ENCODE measurements at regions of chr14 and their contacts with region 1.

Region 1: GRCh38 chr14:58427281-58428117 is at the starts of genes KIAA0586 and TIMM9:
- DNase-seq: peak; percentile 100
- ATAC-seq: peak; percentile 89
- H3K4me3 ChIP-seq: peak within 1 kb of the TSS; percentile 70
- H3K27ac ChIP-seq: peak within 1 kb of the TSS; percentile 77
- H3K4me1 ChIP-seq: peaks cover 22% of the 10 kb centered on the region
- H3K27me3 ChIP-seq: no peaks in the 10 kb centered on the region
- CTCF ChIP-seq: no peak
- total RNA-seq, gene KIAA0586: 50.3 and 50.8 TPM in 2 replicates
- total RNA-seq, gene TIMM9: 105 and 155 TPM in 2 replicates

Region 2: GRCh38 chr14:58171090-58171489 is 256.4 kb before region 1 on chr14:
- CTCF ChIA-PET with region 1: no interaction called
- POLR2A ChIA-PET with region 1: interaction called, 15 read pairs
- intact Hi-C with region 1: no loop called
- DNase-seq: peak; percentile 99
- ATAC-seq: peak; percentile 99
- H3K4me3 ChIP-seq: no peak overlapping the region; the same call in 1 of the 2 replicates
- H3K27ac ChIP-seq: no peak overlapping the region
- H3K4me1 ChIP-seq: peaks cover 16% of the 10 kb centered on the region
- H3K27me3 ChIP-seq: 0 out of 2 replicates have a peak, but pooled peaks cover 7% of the 10 kb centered on the region
- CTCF ChIP-seq: no peak

Region 3: DNA sequence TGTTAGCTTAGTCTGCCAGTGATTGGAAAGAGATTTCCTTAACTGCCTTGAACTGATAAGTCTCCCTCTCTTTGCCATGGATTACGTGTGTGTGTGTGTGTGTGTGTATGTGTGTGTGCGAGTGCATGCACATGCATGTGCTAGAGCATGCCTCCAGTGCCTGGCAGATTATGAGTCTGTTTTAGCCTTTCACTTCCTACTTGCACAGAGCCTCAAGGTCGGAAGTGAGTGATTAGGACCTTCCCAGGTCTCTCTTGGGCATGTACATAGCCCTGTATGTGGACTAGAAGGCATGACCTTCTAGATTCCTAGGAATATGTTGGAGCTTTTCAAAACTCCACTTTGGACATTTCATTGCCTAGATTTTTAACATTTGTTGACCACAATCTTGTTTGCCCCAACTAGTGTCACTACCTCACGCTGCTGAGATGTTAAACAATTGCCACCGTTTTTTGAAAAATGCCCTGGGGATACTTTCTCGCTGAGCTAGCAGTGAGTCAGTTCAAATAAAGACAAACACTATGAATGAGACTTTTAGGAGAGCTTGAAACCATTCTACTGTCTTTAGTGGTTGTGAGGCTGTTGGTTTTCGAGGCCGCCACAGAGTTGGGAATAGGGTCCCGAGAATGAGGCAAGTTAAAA is 28.2 kb after region 1 on chr14:
- CTCF ChIA-PET with region 1: no interaction called
- POLR2A ChIA-PET with region 1: interaction called, 6 read pairs
- intact Hi-C with region 1: loop called (anchors 1 kb)
- DNase-seq: peak; percentile 100
- ATAC-seq: peak; percentile 97
- H3K4me3 ChIP-seq: peak overlapping the region; percentile 42
- H3K27ac ChIP-seq: peak overlapping the region; percentile 83
- H3K4me1 ChIP-seq: peaks cover 22% of the 10 kb centered on the region
- H3K27me3 ChIP-seq: no peaks in the 10 kb centered on the region
- CTCF ChIP-seq: no peak

Region 4: GRCh38 chr14:58465401-58465800 is 37.9 kb after region 1 on chr14:
- CTCF ChIA-PET with region 1: no interaction called
- POLR2A ChIA-PET with region 1: no interaction called
- intact Hi-C with region 1: loop called (anchors 1 kb)
- DNase-seq: peak; percentile 91
- ATAC-seq: peak; percentile 76
- H3K4me3 ChIP-seq: no peak overlapping the region
- H3K27ac ChIP-seq: no peak overlapping the region
- H3K4me1 ChIP-seq: peaks cover 15% of the 10 kb centered on the region
- H3K27me3 ChIP-seq: no peaks in the 10 kb centered on the region
- CTCF ChIP-seq: no peak

Region 5: GRCh38 chr14:58540749-58541632 is 113.5 kb after region 1 on chr14:
- CTCF ChIA-PET with region 1: no interaction called
- POLR2A ChIA-PET with region 1: no interaction called
- intact Hi-C with region 1: loop called (anchors 1 kb)
- DNase-seq: peak; percentile 51
- ATAC-seq: peak; percentile 64
- H3K4me3 ChIP-seq: no peak overlapping the region
- H3K27ac ChIP-seq: peak overlapping the region; percentile 42
- H3K4me1 ChIP-seq: peaks cover 30% of the 10 kb centered on the region
- H3K27me3 ChIP-seq: no peaks in the 10 kb centered on the region
- CTCF ChIP-seq: no peak